ENCODE measurements at regions of chr18 and their contacts with region 1.

Region 1: DNA sequence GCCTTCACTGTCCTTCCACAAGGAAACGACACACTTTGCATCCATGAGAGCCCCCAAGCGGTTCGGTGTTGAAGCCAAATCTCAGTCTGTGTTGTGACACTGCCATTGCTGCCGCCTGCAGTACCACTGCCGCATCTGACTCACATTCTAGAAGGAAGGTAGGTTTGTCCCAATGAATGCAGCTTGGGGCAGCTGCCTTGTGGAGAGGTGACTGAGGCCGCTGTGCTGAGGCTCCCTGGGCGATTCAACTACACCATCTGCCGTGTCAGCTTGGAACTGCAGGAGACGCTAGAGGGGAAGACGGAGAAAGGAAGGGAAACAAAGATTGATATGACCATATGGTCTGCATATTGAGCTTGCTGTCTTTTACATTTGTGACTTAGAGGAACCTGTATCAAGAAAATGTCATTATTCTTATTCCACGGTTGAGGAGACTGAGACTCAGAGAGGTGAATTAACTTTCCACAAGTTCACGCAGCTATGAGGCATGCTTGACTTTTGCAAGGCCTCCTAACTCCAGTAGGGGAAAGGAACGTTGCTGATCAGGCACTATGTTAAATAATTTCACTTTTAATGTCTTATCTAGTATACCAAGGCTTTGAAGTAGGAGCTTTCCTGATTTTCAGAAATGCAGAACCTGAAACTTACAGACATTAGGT is 43.5 kb upstream of the LMAN1 start:
- DNase-seq: peak; percentile 44 to 80 (median 62)
- ATAC-seq: peak; percentile 97
- H3K4me3 ChIP-seq: no peak overlapping the region
- H3K4me3 Mint-ChIP-seq: no peak overlapping the region
- H3K27ac ChIP-seq: no peak overlapping the region
- H3K27ac Mint-ChIP-seq: no peak overlapping the region
- H3K4me1 ChIP-seq: peaks cover 3% of the 10 kb centered on the region
- H3K4me1 Mint-ChIP-seq: no peaks in the 10 kb centered on the region
- H3K27me3 ChIP-seq: no peaks in the 10 kb centered on the region
- H3K27me3 Mint-ChIP-seq: peaks cover 11% of the 10 kb centered on the region
- CTCF ChIP-seq: peak; percentile 95

Region 2: DNA sequence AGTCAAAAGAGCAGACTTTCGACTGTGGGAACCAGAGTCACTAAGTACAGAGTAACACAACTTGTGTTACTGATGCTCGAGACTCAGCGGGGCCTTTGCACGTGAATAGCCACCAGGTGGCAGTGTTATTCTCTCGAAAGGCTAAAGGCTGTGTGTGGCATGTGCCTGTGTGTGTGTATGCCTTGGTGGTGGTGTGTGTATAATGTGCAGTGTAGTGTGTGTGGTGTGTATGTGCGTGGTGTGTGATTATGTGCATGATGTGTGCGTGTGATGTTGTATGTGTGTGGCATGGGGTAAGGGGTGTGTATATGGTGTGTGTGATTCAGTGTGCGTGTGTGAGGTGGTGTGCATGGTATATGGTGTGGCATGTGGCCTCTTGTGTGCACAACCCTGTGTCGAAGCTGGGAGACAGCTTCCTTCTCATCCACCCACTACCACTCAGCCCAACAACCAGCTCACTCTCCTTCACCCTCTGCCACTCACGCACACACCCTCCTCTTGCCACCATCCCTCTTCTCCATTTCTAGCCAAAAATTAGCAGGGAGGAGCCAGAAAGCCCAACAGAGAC is 620.9 kb before region 1 on chr18:
- CTCF ChIA-PET with region 1: no interaction called
- POLR2A ChIA-PET with region 1: no interaction called
- intact Hi-C with region 1: loop called in 1 of 2 experiments (anchors 5 kb)
- DNase-seq: peak; percentile 45 to 81 (median 56)
- ATAC-seq: peak; percentile 78
- H3K4me3 ChIP-seq: no peak overlapping the region
- H3K4me3 Mint-ChIP-seq: no peak overlapping the region
- H3K27ac ChIP-seq: no peak overlapping the region
- H3K27ac Mint-ChIP-seq: no peak overlapping the region
- H3K4me1 ChIP-seq: no peaks in the 10 kb centered on the region
- H3K4me1 Mint-ChIP-seq: no peaks in the 10 kb centered on the region
- H3K27me3 ChIP-seq: peaks cover 9 to 12% of the 10 kb centered on the region in 2 experiments
- H3K27me3 Mint-ChIP-seq: peaks cover 45% of the 10 kb centered on the region
- CTCF ChIP-seq: peak; percentile 90

Region 3: DNA sequence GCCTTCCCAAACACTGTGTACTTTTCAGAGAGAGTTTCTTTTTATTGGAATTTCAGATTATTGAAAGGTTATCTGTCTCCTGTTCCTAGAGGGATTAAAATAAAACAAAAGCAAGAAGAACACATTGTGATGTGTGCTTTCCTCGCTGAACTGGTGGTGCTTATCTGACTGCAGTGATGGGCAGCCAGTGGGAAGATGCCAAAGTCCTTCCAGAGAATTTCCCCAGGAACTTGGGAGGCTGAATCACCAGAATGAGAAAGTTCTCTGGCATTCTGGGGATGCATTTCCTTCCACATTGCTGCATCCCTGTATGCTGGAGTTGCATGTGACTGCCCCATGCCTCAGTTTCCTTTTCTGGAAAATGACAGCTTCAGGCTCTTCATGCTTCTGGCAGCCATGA is 316.8 kb before region 1 on chr18:
- CTCF ChIA-PET with region 1: interaction called, 4 read pairs
- POLR2A ChIA-PET with region 1: no interaction called
- intact Hi-C with region 1: loop called (anchors 2 to 5 kb)
- DNase-seq: no peak
- ATAC-seq: no peak
- H3K4me3 ChIP-seq: no peak overlapping the region
- H3K4me3 Mint-ChIP-seq: no peak overlapping the region
- H3K27ac ChIP-seq: no peak overlapping the region
- H3K27ac Mint-ChIP-seq: no peak overlapping the region
- H3K4me1 ChIP-seq: peaks cover 8% of the 10 kb centered on the region
- H3K4me1 Mint-ChIP-seq: peaks cover 18% of the 10 kb centered on the region
- H3K27me3 ChIP-seq: peaks cover 3 to 8% of the 10 kb centered on the region in 2 experiments
- H3K27me3 Mint-ChIP-seq: peaks cover 18% of the 10 kb centered on the region
- CTCF ChIP-seq: no peak

Region 4: DNA sequence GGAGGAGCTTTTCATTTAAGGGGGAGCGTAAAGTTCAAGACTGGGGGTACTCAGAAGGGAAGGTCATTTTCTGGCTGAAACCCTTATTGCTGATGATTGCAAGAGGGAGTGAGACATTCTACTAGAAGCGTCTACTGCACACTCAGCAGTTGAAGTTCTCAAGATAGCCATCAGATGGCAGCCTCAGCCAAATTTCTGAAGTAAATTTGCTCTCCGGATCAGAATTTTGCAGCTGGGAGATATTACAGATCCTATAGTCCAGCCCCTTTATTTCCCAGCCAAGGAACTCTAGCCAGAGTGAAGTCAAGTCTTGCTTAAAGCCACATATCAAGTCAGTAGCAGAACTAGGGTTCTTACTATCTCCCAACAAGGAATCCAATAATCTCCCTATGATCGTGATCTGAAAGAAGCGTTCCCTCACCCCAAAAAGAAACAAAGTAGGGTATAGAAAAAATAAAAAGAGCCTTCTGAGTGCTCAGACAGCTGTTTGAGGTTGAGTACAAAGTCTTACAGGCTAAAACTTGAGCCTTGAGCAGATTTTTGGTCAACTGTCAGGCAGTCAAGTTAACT is 153.3 kb before region 1 on chr18:
- CTCF ChIA-PET with region 1: interaction called, 12 read pairs
- POLR2A ChIA-PET with region 1: no interaction called
- intact Hi-C with region 1: loop called (anchors 2 kb)
- DNase-seq: peak in 4 of 14 experiments; percentile 16 to 49 (median 36)
- ATAC-seq: no peak
- H3K4me3 ChIP-seq: no peak overlapping the region
- H3K4me3 Mint-ChIP-seq: no peak overlapping the region
- H3K27ac ChIP-seq: no peak overlapping the region
- H3K27ac Mint-ChIP-seq: no peak overlapping the region
- H3K4me1 ChIP-seq: no peaks in the 10 kb centered on the region
- H3K4me1 Mint-ChIP-seq: no peaks in the 10 kb centered on the region
- H3K27me3 ChIP-seq: peaks cover 0 to 15% of the 10 kb centered on the region in 2 experiments
- H3K27me3 Mint-ChIP-seq: peaks cover 71% of the 10 kb centered on the region
- CTCF ChIP-seq: peak; percentile 61

Region 5: GRCh38 chr18:59308248-59308937 is 94.2 kb before region 1 on chr18:
- CTCF ChIA-PET with region 1: interaction called, 67 read pairs
- POLR2A ChIA-PET with region 1: interaction called, 10 read pairs
- intact Hi-C with region 1: loop called (anchors 2 kb)
- DNase-seq: peak; percentile 16 to 78 (median 57)
- ATAC-seq: peak; percentile 73
- H3K4me3 ChIP-seq: peak overlapping the region; percentile 41
- H3K4me3 Mint-ChIP-seq: no peak overlapping the region
- H3K27ac ChIP-seq: no peak overlapping the region
- H3K27ac Mint-ChIP-seq: no peak overlapping the region
- H3K4me1 ChIP-seq: peaks cover 8% of the 10 kb centered on the region
- H3K4me1 Mint-ChIP-seq: no peaks in the 10 kb centered on the region
- H3K27me3 ChIP-seq: peaks cover 19 to 32% of the 10 kb centered on the region in 2 experiments
- H3K27me3 Mint-ChIP-seq: peaks cover 81% of the 10 kb centered on the region
- CTCF ChIP-seq: peak; percentile 88

Region 6: DNA sequence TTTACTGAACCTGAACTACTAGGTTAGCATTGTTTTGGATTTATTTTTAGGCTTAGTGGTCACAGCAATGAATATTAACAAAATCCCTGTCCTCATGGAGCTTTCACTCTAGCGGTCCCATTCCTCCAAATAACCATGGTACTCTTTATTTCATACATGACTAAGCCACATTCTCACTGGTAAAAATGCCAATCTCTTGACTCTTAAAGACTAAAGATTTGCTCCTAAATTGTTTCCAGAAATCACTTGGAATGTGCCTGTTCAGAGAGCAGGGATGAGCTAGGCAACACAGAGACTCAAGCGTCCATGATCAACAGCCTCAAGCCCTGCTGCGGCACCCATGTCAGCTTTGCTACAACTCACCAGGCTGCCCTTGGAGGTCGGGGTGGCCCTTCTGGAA is 57.0 kb before region 1 on chr18:
- CTCF ChIA-PET with region 1: no interaction called
- POLR2A ChIA-PET with region 1: no interaction called
- intact Hi-C with region 1: no loop called
- DNase-seq: no peak
- ATAC-seq: no peak
- H3K4me3 ChIP-seq: no peak overlapping the region
- H3K4me3 Mint-ChIP-seq: no peak overlapping the region
- H3K27ac ChIP-seq: no peak overlapping the region
- H3K27ac Mint-ChIP-seq: no peak overlapping the region
- H3K4me1 ChIP-seq: no peaks in the 10 kb centered on the region
- H3K4me1 Mint-ChIP-seq: peaks cover 39% of the 10 kb centered on the region
- H3K27me3 ChIP-seq: no peaks in the 10 kb centered on the region
- H3K27me3 Mint-ChIP-seq: no peaks in the 10 kb centered on the region
- CTCF ChIP-seq: no peak

Region 7: GRCh38 chr18:59502274-59503175 is 100.0 kb after region 1 on chr18:
- CTCF ChIA-PET with region 1: no interaction called
- POLR2A ChIA-PET with region 1: no interaction called
- intact Hi-C with region 1: no loop called
- DNase-seq: no peak
- ATAC-seq: no peak
- H3K4me3 ChIP-seq: no peak overlapping the region
- H3K4me3 Mint-ChIP-seq: no peak overlapping the region
- H3K27ac ChIP-seq: no peak overlapping the region
- H3K27ac Mint-ChIP-seq: no peak overlapping the region
- H3K4me1 ChIP-seq: no peaks in the 10 kb centered on the region
- H3K4me1 Mint-ChIP-seq: no peaks in the 10 kb centered on the region
- H3K27me3 ChIP-seq: peaks cover 0 to 2% of the 10 kb centered on the region in 2 experiments
- H3K27me3 Mint-ChIP-seq: peaks cover 6% of the 10 kb centered on the region
- CTCF ChIP-seq: no peak

Measured in CD4-positive, alpha-beta T cell (primary cell).